IMR-90 (cell line): ENCODE measurements at regions of chr3 and their contacts with region 1.

Region 1: DNA sequence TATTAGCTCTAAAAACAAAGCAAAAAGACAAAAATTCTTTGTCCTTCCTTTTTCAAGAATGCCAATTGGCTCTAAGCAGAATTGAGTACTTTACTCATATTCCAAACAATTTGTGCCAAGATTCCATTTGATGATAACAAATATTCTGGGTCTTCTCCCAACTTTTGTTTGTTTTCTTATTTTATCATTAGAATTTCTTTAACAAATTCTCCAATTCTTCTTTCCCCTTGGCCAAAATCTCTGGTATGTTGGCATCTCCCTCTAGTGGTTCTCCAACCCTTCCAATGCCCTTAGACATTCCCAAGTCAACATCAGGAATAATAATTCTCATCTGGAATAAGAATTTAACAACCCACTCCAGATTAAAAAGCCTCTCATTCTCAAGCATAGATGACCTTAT is 5.3 kb downstream of the CPOX start:
- DNase-seq: peak; percentile 29
- ATAC-seq: peak; percentile 79
- H3K4me3 ChIP-seq: no peak overlapping the region
- H3K27ac ChIP-seq: no peak overlapping the region
- H3K4me1 ChIP-seq: no peaks in the 10 kb centered on the region; the same call in 1 of the 2 replicates
- H3K27me3 ChIP-seq: no peaks in the 10 kb centered on the region
- CTCF ChIP-seq: peak; percentile 31
- POLR2A ChIP-seq: no peak
- RAD21 ChIP-seq: no peak

Region 2: GRCh38 chr3:98039322-98040024 is 548.6 kb before region 1 on chr3:
- CTCF ChIA-PET with region 1: no interaction called
- POLR2A ChIA-PET with region 1: no interaction called
- dilution Hi-C with region 1: no loop called
- in situ Hi-C with region 1: no loop called
- intact Hi-C with region 1: loop called (anchors 5 kb)
- DNase-seq: peak; percentile 87
- ATAC-seq: peak; percentile 99
- H3K4me3 ChIP-seq: peak overlapping the region; percentile 66
- H3K27ac ChIP-seq: no peak overlapping the region
- H3K4me1 ChIP-seq: no peaks in the 10 kb centered on the region
- H3K27me3 ChIP-seq: no peaks in the 10 kb centered on the region
- CTCF ChIP-seq: peak; percentile 69
- POLR2A ChIP-seq: no peak
- RAD21 ChIP-seq: peak; percentile 74

Region 3: GRCh38 chr3:98522244-98523090 is 65.6 kb before region 1 on chr3 and contains the start of gene CLDND1:
- CTCF ChIA-PET with region 1: no interaction called
- POLR2A ChIA-PET with region 1: no interaction called
- dilution Hi-C with region 1: no loop called
- in situ Hi-C with region 1: no loop called
- intact Hi-C with region 1: loop called (anchors 5 kb)
- DNase-seq: peak; percentile 96
- ATAC-seq: peak; percentile 98
- H3K4me3 ChIP-seq: peak within 1 kb of the TSS; percentile 75
- H3K27ac ChIP-seq: peak within 1 kb of the TSS; percentile 93
- H3K4me1 ChIP-seq: peaks cover 2% of the 10 kb centered on the region; the same call in 1 of the 2 replicates
- H3K27me3 ChIP-seq: no peaks in the 10 kb centered on the region
- CTCF ChIP-seq: no peak
- POLR2A ChIP-seq: peak; percentile 90
- RAD21 ChIP-seq: no peak; the same call in 1 of the 2 replicates
- total RNA-seq, gene CLDND1: 78.3 and 125 TPM in 2 replicates